ENCODE measurements at regions of chr3 and their contacts with region 1.

Region 1: DNA sequence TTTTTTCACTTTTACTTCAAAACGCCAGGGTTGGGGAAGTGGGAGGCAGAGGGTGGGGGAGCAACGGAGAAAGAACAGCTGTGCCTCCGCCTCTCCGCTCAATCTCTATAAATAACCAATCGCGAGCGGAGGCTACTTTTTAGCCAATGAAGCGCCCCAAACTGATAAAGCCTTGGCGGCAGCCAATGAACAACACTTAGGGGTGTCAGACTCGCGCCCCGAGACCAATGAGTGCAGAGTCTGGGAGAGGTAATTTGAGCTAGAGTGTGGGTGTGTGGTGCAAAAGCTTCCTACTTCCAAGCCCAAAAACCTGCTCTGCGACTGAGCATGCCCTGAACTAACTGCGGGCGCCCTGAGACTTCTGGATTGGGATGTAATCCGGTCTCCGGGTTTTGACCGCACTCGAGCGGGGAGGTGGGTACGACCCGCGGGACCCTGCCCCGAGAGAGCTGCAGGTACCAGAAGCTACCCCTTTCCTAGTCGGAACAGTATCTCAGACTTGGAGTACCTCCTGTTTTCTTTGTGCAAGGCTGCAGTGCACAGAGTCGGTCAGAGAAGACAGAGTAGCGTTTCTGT is 800 bp upstream of the RAP2B start:
- DNase-seq: peak; percentile 96
- H3K4me3 Mint-ChIP-seq: peak overlapping the region; percentile 98
- H3K27ac Mint-ChIP-seq: peak overlapping the region; percentile 96
- H3K4me1 Mint-ChIP-seq: peaks cover 27% of the 10 kb centered on the region
- H3K27me3 Mint-ChIP-seq: no peaks in the 10 kb centered on the region

Region 2: DNA sequence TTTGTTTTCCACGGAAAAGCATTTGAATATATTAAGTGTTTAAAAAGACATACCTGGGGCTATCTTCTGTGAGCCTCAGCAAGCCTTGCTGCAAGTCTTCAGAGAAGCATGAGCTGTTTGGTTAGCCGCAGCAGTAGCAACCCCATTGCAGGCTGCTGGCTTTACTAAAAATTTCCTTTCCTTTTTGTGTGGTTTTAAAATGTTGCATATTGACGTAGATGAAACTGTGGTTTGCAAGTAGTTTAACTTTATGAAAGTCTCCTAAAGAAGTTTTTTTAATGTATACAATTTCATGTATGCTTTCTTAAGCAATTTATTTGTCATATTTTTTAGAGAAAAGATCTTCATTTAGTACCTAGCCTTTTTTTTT is 1958.2 kb before region 1 on chr3 and contains the start of gene GPR171:
- CTCF ChIA-PET with region 1: no interaction called
- intact Hi-C with region 1: loop called (anchors 5 kb)
- DNase-seq: peak; percentile 81
- H3K4me3 Mint-ChIP-seq: peak within 1 kb of the TSS; percentile 94
- H3K27ac Mint-ChIP-seq: peak within 1 kb of the TSS; percentile 100
- H3K4me1 Mint-ChIP-seq: peaks cover 60% of the 10 kb centered on the region
- H3K27me3 Mint-ChIP-seq: no peaks in the 10 kb centered on the region
- total RNA-seq, gene GPR171: 42.8 to 46.9 TPM

Region 3: GRCh38 chr3:152268555-152269425 is 892.4 kb before region 1 on chr3 and contains the start of gene MBNL1:
- CTCF ChIA-PET with region 1: no interaction called
- intact Hi-C with region 1: loop called (anchors 5 kb)
- DNase-seq: peak; percentile 91
- H3K4me3 Mint-ChIP-seq: peak within 1 kb of the TSS; percentile 81
- H3K27ac Mint-ChIP-seq: peak within 1 kb of the TSS; percentile 91
- H3K4me1 Mint-ChIP-seq: peaks cover 46% of the 10 kb centered on the region
- H3K27me3 Mint-ChIP-seq: no peaks in the 10 kb centered on the region
- total RNA-seq, gene MBNL1: 387 to 391 TPM

Region 4: DNA sequence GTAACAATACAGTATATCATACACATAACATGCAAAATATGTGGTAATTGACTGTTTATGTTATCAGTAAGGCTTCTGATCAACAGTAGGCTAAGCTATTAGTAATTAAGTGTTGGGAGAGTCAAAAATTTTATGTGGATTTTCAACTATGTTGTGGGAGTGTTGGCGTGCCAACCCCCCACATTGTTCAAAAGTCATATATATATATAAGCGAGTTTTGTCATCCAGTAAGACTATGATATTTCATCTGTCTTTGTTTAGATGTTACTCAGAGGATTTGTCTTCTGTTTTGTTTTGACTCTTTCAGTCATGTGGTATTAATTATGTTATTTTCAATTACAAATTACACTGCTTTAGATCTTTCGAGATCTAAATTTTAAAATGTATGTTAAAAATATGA is 50.2 kb before region 1 on chr3:
- CTCF ChIA-PET with region 1: no interaction called
- intact Hi-C with region 1: no loop called
- DNase-seq: no peak
- H3K4me3 Mint-ChIP-seq: no peak overlapping the region
- H3K27ac Mint-ChIP-seq: no peak overlapping the region
- H3K4me1 Mint-ChIP-seq: no peaks in the 10 kb centered on the region
- H3K27me3 Mint-ChIP-seq: no peaks in the 10 kb centered on the region

Region 5: GRCh38 chr3:153138276-153139210 is 22.7 kb before region 1 on chr3:
- CTCF ChIA-PET with region 1: interaction called, 3 read pairs
- intact Hi-C with region 1: loop called (anchors 1 kb)
- DNase-seq: peak; percentile 88
- H3K4me3 Mint-ChIP-seq: no peak overlapping the region
- H3K27ac Mint-ChIP-seq: peak overlapping the region; percentile 71
- H3K4me1 Mint-ChIP-seq: peaks cover 24% of the 10 kb centered on the region
- H3K27me3 Mint-ChIP-seq: peaks cover 3% of the 10 kb centered on the region

Region 6: GRCh38 chr3:153284282-153284938 is 123.2 kb after region 1 on chr3:
- CTCF ChIA-PET with region 1: interaction called, 8 read pairs
- intact Hi-C with region 1: loop called (anchors 1 kb)
- DNase-seq: peak; percentile 72
- H3K4me3 Mint-ChIP-seq: no peak overlapping the region
- H3K27ac Mint-ChIP-seq: peak overlapping the region; percentile 68
- H3K4me1 Mint-ChIP-seq: peaks cover 40% of the 10 kb centered on the region
- H3K27me3 Mint-ChIP-seq: no peaks in the 10 kb centered on the region

Region 7: GRCh38 chr3:153595186-153595815 is 434.1 kb after region 1 on chr3:
- CTCF ChIA-PET with region 1: no interaction called
- intact Hi-C with region 1: loop called (anchors 2 kb)
- DNase-seq: no peak
- H3K4me3 Mint-ChIP-seq: no peak overlapping the region
- H3K27ac Mint-ChIP-seq: no peak overlapping the region
- H3K4me1 Mint-ChIP-seq: peaks cover 4% of the 10 kb centered on the region
- H3K27me3 Mint-ChIP-seq: no peaks in the 10 kb centered on the region

Region 8: DNA sequence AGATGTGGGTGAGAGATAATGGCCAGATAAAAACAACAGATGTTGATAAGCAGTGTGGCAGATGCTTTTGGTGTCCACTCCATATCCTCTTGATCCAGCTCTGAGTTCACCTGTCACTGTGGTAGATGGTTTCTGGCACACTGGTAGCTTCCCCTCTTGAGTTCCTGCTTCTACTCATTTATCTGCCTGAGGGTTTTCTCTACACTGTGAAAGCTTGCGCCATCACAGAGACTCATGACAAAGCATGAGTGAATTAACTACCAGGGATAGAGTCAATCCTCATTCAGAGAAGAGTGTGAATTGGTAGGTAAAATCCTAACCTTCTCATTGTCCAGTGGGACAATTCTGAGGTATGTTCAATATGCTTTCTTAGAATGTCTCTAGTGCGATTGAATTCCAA is 909.9 kb after region 1 on chr3:
- CTCF ChIA-PET with region 1: no interaction called
- intact Hi-C with region 1: no loop called
- DNase-seq: no peak
- H3K4me3 Mint-ChIP-seq: no peak overlapping the region
- H3K27ac Mint-ChIP-seq: no peak overlapping the region
- H3K4me1 Mint-ChIP-seq: no peaks in the 10 kb centered on the region
- H3K27me3 Mint-ChIP-seq: peaks cover 5% of the 10 kb centered on the region

Region 9: DNA sequence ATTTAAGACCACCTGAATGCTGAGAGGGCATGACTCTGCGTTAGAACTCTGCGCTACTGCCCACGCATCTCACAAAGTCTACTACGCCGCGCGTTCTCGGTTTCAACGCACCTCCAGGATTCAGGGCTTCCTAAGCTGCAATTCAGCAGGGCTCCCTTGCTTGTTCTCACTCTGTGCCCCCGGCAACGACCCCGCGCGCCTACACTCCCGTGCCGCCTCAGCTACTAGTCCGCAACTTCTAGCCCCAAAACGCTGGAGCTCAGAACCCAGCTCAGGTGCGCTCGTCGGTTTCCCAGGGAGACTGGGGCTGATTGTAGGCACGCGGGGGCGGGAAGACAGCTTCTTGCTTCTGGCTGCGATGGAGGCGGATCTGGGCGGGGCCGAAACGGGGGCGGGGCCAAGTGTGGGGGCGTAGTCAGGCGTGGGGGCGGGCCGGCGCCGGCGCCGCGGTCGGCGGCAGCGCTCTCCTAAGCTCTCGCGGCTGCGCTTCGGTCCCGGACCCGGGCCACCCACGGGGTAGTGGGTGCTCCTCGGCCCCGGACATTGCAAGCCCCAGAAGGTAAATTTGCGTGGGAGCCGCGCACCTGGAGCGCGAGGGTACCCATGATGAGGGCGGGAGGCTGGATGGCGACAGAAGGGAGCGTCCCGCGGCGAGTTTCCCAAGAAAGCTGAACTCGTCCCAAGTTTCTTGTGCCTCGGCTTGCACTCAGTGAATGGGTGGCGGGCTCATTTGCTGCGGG is 959.9 kb after region 1 on chr3 and contains the start of gene ARHGEF26:
- CTCF ChIA-PET with region 1: no interaction called
- intact Hi-C with region 1: loop called (anchors 5 kb)
- DNase-seq: peak; percentile 89
- H3K4me3 Mint-ChIP-seq: peak within 1 kb of the TSS; percentile 79
- H3K27ac Mint-ChIP-seq: no peak within 1 kb of the TSS
- H3K4me1 Mint-ChIP-seq: peaks cover 12% of the 10 kb centered on the region
- H3K27me3 Mint-ChIP-seq: peaks cover 58% of the 10 kb centered on the region
- total RNA-seq, gene ARHGEF26: 0.25 to 0.45 TPM

Measured in activated naive CD4-positive, alpha-beta T cell treated with anti-CD3 and anti-CD28 coated beads for 36 hours (primary cell).